ENCODE measurements at regions of chr12 and their contacts with region 1.

Region 1: DNA sequence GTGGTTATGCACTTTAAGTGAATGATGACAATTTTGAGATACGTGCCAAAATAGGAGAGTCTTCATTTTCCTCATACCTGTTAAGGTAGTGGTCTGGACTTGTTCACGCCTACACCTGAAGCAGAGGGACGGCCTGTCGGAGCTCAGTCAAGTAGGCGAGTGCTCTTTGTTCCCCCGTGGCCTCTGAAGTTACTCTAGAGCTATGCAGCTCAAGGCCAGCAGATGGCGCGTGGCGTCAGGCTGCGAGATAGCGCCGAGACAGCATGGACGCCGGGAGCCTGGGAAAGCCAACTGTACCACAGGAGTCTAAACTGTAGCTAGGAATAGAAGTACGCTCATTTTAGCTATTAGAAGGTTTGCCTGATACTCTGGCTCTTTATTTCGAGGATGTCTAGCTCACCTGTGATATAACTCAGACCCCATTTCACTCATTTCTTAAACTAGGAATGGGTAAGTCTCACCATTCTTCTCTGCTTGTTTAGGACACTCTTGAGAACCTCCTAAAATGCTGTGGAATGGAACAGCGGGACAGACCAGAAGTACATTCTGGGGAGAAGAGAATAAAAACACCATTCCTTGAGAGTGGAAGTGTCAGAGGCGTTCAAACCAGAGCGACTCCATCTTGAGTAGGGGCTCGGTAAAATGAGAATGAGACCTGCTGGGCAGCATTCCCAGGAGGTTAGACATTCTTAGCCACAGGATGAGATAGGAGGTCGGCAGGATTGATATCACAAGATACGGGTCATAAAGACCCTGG is 267.4 kb upstream of the HMGA2 start:
- DNase-seq: peak; percentile 18 to 45
- ATAC-seq: peak; percentile 63 to 75
- H3K4me3 ChIP-seq: no peak overlapping the region
- H3K27ac ChIP-seq: no peak overlapping the region
- H3K4me1 ChIP-seq: peaks cover 0 to 3% of the 10 kb centered on the region in 2 donors
- H3K27me3 ChIP-seq: no peaks in the 10 kb centered on the region
- CTCF ChIP-seq: peak; percentile 44 to 86 (median 73)
- POLR2A ChIP-seq: no peak

Region 2: DNA sequence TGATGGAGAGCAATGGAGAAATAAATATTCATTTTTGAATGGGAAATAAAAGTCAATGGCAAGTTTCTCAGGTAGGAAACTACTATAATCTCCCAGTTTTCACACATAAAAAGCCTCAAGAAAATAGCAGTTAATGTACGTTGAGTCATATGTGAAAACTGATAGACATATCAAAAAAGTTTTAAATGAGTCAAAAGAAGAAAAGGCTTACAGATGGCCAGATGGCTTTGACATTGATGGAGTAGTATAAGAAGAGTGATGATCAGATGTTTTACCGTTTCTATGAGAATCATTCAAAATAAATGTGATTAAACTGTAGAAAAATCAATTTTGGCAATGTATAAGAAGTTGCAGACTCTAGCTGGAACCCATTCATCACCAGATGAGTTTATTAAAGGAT is 475.9 kb after region 1 on chr12:
- in situ Hi-C with region 1: no loop called
- intact Hi-C with region 1: loop called (anchors 5 kb)
- DNase-seq: no peak
- ATAC-seq: no peak
- H3K4me3 ChIP-seq: no peak overlapping the region
- H3K27ac ChIP-seq: no peak overlapping the region
- H3K4me1 ChIP-seq: no peaks in the 10 kb centered on the region
- H3K27me3 ChIP-seq: no peaks in the 10 kb centered on the region
- CTCF ChIP-seq: no peak
- POLR2A ChIP-seq: no peak

Region 3: GRCh38 chr12:66107451-66107915 is 550.6 kb after region 1 on chr12:
- in situ Hi-C with region 1: no loop called
- intact Hi-C with region 1: loop called (anchors 5 kb)
- DNase-seq: peak; percentile 10 to 17
- ATAC-seq: peak; percentile 66 to 94
- H3K4me3 ChIP-seq: no peak overlapping the region
- H3K27ac ChIP-seq: no peak overlapping the region
- H3K4me1 ChIP-seq: peaks cover 0 to 2% of the 10 kb centered on the region in 2 donors
- H3K27me3 ChIP-seq: no peaks in the 10 kb centered on the region
- CTCF ChIP-seq: peak; percentile 35 to 84 (median 74)
- POLR2A ChIP-seq: no peak